ENCODE measurements at regions of chr14 and their contacts with region 1.

Region 1: GRCh38 chr14:100239840-100240724 is 1.1 kb downstream of the YY1 start:
- DNase-seq: peak; percentile 87
- ATAC-seq: peak; percentile 42
- H3K4me3 Mint-ChIP-seq: peak overlapping the region; percentile 97
- H3K27ac Mint-ChIP-seq: peak overlapping the region; percentile 89
- H3K4me1 Mint-ChIP-seq: peaks cover 46% of the 10 kb centered on the region
- H3K27me3 Mint-ChIP-seq: no peaks in the 10 kb centered on the region

Region 2: DNA sequence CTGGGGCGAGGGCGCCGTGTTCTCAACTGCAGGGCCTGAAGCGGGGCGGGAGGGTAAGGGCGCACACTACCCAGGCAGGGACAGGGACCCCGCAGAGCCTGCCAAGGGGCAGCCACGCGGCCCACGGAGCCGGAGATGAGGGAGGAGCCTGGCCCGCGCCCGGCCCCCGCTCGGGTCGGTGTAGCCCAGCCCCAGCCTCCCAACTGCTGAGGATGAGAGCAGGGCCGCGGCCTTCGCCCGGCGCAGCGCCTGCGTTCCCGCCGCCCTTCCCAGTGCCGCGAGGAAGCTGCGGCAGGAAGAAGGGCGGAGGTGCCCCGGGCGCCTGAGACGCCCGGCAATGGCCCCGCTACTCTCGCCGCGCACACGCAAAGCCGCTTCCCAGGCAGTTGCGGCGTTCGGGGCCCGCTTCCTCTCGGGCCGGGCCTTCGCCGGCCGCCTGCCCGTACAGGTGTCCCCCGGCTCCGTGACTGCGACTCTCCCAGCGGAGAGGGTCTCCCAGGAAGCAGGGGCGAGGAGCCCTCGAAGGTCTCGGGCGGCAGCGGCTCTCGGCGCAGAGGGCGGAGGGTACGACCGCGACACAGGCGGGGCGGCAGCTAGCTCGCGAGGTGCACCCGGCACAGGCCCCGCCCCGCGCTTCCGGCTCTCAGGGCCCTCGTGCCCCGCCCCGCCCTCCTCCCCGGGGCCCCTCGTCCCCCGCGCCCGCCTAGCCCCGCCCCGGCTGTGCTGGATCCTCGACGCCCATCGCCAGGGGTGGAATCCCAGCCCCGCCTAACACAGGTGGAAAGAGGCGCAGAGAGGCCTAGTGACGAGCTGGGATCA is 25.9 kb before region 1 on chr14:
- CTCF ChIA-PET with region 1: interaction called, 28 read pairs
- DNase-seq: peak; percentile 94
- ATAC-seq: peak; percentile 96
- H3K4me3 Mint-ChIP-seq: peak overlapping the region; percentile 68
- H3K27ac Mint-ChIP-seq: peak overlapping the region; percentile 88
- H3K4me1 Mint-ChIP-seq: peaks cover 31% of the 10 kb centered on the region
- H3K27me3 Mint-ChIP-seq: no peaks in the 10 kb centered on the region

Region 3: GRCh38 chr14:100221533-100222223 is 18.4 kb before region 1 on chr14:
- CTCF ChIA-PET with region 1: interaction called, 53 read pairs
- DNase-seq: peak; percentile 89
- ATAC-seq: peak; percentile 93
- H3K4me3 Mint-ChIP-seq: no peak overlapping the region
- H3K27ac Mint-ChIP-seq: no peak overlapping the region
- H3K4me1 Mint-ChIP-seq: peaks cover 33% of the 10 kb centered on the region
- H3K27me3 Mint-ChIP-seq: no peaks in the 10 kb centered on the region

Region 4: GRCh38 chr14:100263144-100263543 is 23.1 kb after region 1 on chr14:
- CTCF ChIA-PET with region 1: interaction called, 22 read pairs
- DNase-seq: no peak
- ATAC-seq: no peak
- H3K4me3 Mint-ChIP-seq: no peak overlapping the region
- H3K27ac Mint-ChIP-seq: no peak overlapping the region
- H3K4me1 Mint-ChIP-seq: peaks cover 63% of the 10 kb centered on the region
- H3K27me3 Mint-ChIP-seq: no peaks in the 10 kb centered on the region

Measured in activated CD8-positive, alpha-beta memory T cell treated with anti-CD3 and anti-CD28 coated beads, Interleukin-2, amount 10 ng/mL, durations not matched to agents 7 days and 5 days (primary cell).